ENCODE measurements at regions of chr11 and their contacts with region 1.

Region 1: DNA sequence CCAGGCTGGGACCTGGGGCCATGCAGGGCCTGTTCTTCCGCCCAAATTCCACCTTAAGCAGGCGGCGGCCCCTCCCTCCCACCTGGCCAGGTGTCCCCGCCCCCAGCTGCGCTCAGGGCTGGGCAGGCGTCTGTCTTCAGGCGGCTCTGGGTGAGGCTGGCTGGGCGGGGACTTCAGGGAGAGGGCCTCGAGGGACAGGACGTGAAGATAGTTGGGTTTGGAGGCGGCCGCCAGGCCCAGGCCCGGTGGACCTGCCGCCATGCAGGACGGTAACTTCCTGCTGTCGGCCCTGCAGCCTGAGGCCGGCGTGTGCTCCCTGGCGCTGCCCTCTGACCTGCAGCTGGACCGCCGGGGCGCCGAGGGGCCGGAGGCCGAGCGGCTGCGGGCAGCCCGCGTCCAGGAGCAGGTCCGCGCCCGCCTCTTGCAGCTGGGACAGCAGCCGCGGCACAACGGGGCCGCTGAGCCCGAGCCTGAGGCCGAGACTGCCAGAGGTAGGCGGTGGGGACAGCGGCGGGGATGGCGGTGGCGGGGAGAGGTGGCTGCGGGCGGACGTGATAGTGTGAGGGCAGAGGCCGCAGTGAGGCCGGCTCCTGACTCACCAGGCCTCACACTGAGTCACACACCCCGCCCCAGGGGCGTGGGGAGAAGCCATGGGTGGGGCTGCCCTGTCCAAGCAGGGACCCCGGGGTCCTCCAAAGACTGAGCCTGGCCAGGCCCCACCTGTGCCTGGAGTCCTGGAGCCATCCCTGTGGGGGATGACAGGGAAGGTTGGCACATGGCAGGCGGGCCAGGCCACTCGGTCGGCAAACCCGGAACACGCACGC is at the start of gene PKP3:
- DNase-seq: peak; percentile 94
- H3K4me3 Mint-ChIP-seq: peak within 1 kb of the TSS; percentile 96
- H3K27ac Mint-ChIP-seq: peak within 1 kb of the TSS; percentile 94
- H3K4me1 Mint-ChIP-seq: peaks cover 19% of the 10 kb centered on the region
- H3K27me3 Mint-ChIP-seq: no peaks in the 10 kb centered on the region
- CTCF ChIP-seq: no peak
- total RNA-seq, gene PKP3: 129 and 177 TPM in 2 replicates

Region 2: GRCh38 chr11:369336-370018 is 24.8 kb before region 1 on chr11 and contains the start of gene B4GALNT4:
- CTCF ChIA-PET with region 1: interaction called, 9 read pairs
- POLR2A ChIA-PET with region 1: interaction called, 10 read pairs
- intact Hi-C with region 1: no loop called
- DNase-seq: peak; percentile 56
- H3K4me3 Mint-ChIP-seq: peak within 1 kb of the TSS; percentile 72
- H3K27ac Mint-ChIP-seq: no peak within 1 kb of the TSS
- H3K4me1 Mint-ChIP-seq: peaks cover 16% of the 10 kb centered on the region
- H3K27me3 Mint-ChIP-seq: peaks cover 13% of the 10 kb centered on the region
- CTCF ChIP-seq: no peak
- total RNA-seq, gene B4GALNT4: 20.0 and 25.9 TPM in 2 replicates

Region 3: DNA sequence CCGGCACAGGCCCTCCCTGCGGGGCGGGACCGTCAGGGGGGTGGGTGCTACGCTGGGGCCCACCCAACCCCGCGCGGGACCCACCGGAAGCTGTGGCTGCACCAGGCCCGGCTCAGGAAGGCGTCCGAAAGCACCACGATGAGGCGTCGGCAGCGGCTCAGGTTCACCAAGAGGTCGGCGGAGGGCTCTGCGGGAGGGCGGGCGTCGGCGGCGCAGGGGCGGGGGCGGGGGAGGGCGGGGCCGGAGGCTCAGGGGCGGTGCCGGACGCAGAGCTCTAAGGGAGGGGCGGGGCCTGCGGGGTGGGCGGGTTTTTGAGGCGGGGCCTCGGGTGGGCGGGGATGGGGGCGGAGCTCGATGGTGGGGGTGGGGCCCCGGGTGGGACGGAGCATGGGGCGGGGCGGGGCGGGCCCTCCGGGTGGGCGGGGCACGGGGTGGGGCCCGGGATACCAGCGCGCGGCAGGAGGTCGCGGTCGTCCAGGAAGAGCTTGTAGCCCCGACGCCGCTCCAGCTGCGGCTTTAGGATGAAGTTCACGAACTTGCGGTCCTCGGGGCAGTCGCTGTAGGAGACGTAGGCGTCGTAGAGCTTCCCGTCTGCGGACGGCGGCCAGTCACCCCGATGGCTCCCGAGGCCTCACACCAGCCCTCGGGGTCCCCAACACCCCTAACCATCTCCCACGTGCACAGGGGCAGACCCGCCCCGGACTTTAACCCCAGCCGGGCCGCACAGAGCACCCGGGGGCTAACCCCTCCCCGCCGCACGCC is 12.9 kb after region 1 on chr11:
- CTCF ChIA-PET with region 1: no interaction called
- POLR2A ChIA-PET with region 1: interaction called, 27 read pairs
- intact Hi-C with region 1: no loop called
- DNase-seq: peak; percentile 82
- H3K4me3 Mint-ChIP-seq: peak overlapping the region; percentile 12
- H3K27ac Mint-ChIP-seq: no peak overlapping the region
- H3K4me1 Mint-ChIP-seq: no peaks in the 10 kb centered on the region
- H3K27me3 Mint-ChIP-seq: no peaks in the 10 kb centered on the region
- CTCF ChIP-seq: no peak

Region 4: GRCh38 chr11:506238-506994 is 112.2 kb after region 1 on chr11:
- CTCF ChIA-PET with region 1: no interaction called
- POLR2A ChIA-PET with region 1: interaction called, 12 read pairs
- intact Hi-C with region 1: no loop called
- DNase-seq: peak; percentile 95
- H3K4me3 Mint-ChIP-seq: peak overlapping the region; percentile 95
- H3K27ac Mint-ChIP-seq: peak overlapping the region; percentile 99
- H3K4me1 Mint-ChIP-seq: peaks cover 6% of the 10 kb centered on the region
- H3K27me3 Mint-ChIP-seq: no peaks in the 10 kb centered on the region
- CTCF ChIP-seq: no peak

Region 5: GRCh38 chr11:518463-519250 is 124.4 kb after region 1 on chr11:
- CTCF ChIA-PET with region 1: interaction called, 3 read pairs
- POLR2A ChIA-PET with region 1: interaction called, 4 read pairs
- intact Hi-C with region 1: loop called (anchors 5 kb)
- DNase-seq: peak; percentile 98
- H3K4me3 Mint-ChIP-seq: peak overlapping the region; percentile 60
- H3K27ac Mint-ChIP-seq: peak overlapping the region; percentile 85
- H3K4me1 Mint-ChIP-seq: peaks cover 10% of the 10 kb centered on the region
- H3K27me3 Mint-ChIP-seq: no peaks in the 10 kb centered on the region
- CTCF ChIP-seq: peak; percentile 98